A673 (cell line): ENCODE measurements at regions of chr12 and their contacts with region 1.

Region 1: GRCh38 chr12:83005534-83006197 is 319.0 kb downstream of the TMTC2 start:
- DNase-seq: no peak
- H3K4me3 ChIP-seq: no peak overlapping the region
- H3K27ac ChIP-seq: no peak overlapping the region
- H3K4me1 ChIP-seq: no peaks in the 10 kb centered on the region
- H3K27me3 ChIP-seq: no peaks in the 10 kb centered on the region
- CTCF ChIP-seq: no peak

Region 2: DNA sequence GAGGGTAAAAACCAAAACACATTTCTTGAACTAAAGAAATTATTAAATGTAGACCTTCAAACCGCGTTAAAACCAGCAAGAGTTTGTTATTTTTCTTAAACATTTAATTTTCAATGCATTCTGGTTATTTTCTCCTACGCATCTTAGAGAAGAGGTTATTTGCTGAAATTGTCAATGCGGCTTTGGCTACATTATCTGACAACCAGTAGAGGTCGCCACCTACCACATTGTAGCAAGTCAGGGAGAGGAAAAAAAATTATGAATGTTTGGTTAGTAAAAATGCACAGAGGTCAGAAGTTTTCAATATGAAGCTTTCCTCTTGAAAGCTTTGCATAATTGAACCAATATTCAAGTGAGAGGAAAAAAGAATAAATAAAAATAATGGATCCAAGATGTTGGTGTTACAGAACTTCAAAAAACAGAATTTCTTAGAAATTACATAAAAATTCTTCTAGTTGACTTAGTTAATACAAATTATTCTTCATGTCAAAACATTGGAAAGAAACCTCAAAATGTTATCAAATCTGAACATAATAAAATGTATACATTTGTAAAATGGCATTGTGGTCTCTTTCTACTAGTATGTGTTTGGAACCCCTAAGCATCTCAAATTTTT is 478.4 kb before region 1 on chr12:
- CTCF ChIA-PET with region 1: no interaction called
- POLR2A ChIA-PET with region 1: no interaction called
- intact Hi-C with region 1: loop called (anchors 10 kb)
- DNase-seq: peak; percentile 61
- H3K4me3 ChIP-seq: no peak overlapping the region
- H3K27ac ChIP-seq: no peak overlapping the region
- H3K4me1 ChIP-seq: no peaks in the 10 kb centered on the region
- H3K27me3 ChIP-seq: peaks cover 8% of the 10 kb centered on the region
- CTCF ChIP-seq: peak; percentile 90

Region 3: GRCh38 chr12:83434600-83434999 is 428.9 kb after region 1 on chr12:
- CTCF ChIA-PET with region 1: no interaction called
- POLR2A ChIA-PET with region 1: no interaction called
- intact Hi-C with region 1: loop called (anchors 5 kb)
- DNase-seq: peak; percentile 27
- H3K4me3 ChIP-seq: no peak overlapping the region
- H3K27ac ChIP-seq: no peak overlapping the region
- H3K4me1 ChIP-seq: no peaks in the 10 kb centered on the region
- H3K27me3 ChIP-seq: no peaks in the 10 kb centered on the region
- CTCF ChIP-seq: no peak; the same call in 1 of the 2 replicates

Region 4: DNA sequence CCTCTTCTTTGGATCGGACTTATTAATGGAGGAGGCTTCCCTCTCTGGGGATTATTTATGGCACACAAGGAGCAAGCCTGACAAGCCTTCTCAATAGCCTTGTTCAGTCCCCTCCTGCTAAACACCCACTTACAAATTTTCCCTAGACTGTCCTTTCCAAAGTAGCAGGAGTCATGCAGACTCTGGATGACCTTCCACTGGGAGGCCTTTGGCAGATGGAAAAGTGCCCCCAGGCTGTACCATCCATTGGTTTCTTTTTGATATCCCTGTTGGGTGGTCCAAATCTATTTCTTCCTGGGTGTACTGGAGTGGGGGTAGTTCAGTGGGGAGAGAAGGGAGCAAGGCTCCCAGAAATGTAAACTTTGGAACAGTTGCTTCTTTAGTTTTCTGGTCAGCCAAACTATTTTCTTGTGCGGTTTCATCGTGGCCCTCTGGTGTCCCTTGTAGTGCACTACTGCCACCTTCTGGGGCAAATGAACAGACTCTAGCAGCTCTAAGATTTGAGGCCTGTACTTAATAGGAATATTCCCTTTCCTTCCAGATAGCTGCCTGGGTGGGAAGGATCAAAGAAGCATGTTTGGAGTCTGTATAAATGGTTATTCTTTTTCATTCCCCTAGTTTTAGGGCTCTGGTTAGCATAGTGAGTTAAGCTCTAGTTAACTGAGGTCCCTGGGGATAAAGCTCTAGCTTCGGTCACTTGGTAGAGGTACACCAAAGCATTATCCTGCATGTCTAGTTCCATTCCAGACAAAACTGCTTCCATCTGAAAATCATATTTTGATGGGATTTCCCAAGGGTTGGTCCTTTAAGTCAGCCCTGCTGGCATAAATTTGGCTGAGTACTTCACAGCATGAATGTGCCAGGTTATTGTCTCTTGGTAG is 1497.5 kb after region 1 on chr12:
- CTCF ChIA-PET with region 1: no interaction called
- POLR2A ChIA-PET with region 1: no interaction called
- intact Hi-C with region 1: loop called (anchors 10 kb)
- DNase-seq: peak; percentile 74
- H3K4me3 ChIP-seq: no peak overlapping the region
- H3K27ac ChIP-seq: no peak overlapping the region
- H3K4me1 ChIP-seq: peaks cover under 1% of the 10 kb centered on the region
- H3K27me3 ChIP-seq: no peaks in the 10 kb centered on the region
- CTCF ChIP-seq: peak; percentile 76